WTC11 (cell line): ENCODE measurements at regions of chr10 and their contacts with region 1.

Region 1: DNA sequence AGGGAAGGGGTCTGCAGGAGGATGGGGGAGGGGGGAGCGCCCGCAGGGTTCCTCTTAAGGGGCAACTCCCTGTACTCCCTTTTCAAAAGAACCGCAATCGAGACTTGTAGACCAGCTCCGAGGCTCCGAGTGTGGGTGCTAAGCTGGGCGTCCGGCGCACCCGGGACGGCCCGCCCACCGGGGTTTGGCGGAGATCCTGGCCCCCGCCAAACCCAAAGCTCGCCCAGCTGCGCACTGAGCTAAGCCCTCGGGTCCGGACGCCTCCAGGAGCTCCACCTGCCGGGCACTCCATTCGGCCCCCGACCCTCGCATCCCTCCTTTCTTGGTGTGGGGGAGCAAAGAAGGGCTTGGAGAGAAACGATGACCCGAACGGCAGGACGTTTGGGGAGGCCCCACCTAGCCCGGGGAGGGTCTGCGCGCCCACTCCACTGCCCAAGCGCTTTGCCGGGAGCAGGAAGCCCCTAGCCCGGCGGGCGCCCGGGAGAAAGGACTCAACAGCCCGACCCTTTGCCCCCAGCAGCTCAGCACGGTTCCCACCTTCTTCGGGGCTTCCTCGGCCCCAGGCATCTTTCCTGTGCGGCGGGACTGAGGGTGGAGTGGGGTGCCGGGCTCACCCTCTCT is 651 bp downstream of the AFAP1L2 start:
- DNase-seq: peak; percentile 66
- ATAC-seq: peak; percentile 68
- H3K4me3 Mint-ChIP-seq: peak overlapping the region; percentile 88
- H3K27ac Mint-ChIP-seq: no peak overlapping the region
- H3K4me1 Mint-ChIP-seq: peaks cover 33% of the 10 kb centered on the region
- H3K27me3 Mint-ChIP-seq: peaks cover 62% of the 10 kb centered on the region
- CTCF ChIP-seq: no peak

Region 2: GRCh38 chr10:114320249-114321116 is 83.2 kb before region 1 on chr10:
- CTCF ChIA-PET with region 1: no interaction called
- POLR2A ChIA-PET with region 1: no interaction called
- DNase-seq: no peak
- ATAC-seq: peak; percentile 38
- H3K4me3 Mint-ChIP-seq: no peak overlapping the region
- H3K27ac Mint-ChIP-seq: no peak overlapping the region
- H3K4me1 Mint-ChIP-seq: peaks cover 5% of the 10 kb centered on the region
- H3K27me3 Mint-ChIP-seq: no peaks in the 10 kb centered on the region
- CTCF ChIP-seq: no peak

Region 3: GRCh38 chr10:114388275-114388674 is 15.4 kb before region 1 on chr10:
- CTCF ChIA-PET with region 1: interaction called, 40 read pairs
- POLR2A ChIA-PET with region 1: no interaction called
- DNase-seq: no peak
- ATAC-seq: no peak
- H3K4me3 Mint-ChIP-seq: no peak overlapping the region
- H3K27ac Mint-ChIP-seq: no peak overlapping the region
- H3K4me1 Mint-ChIP-seq: peaks cover 9% of the 10 kb centered on the region
- H3K27me3 Mint-ChIP-seq: no peaks in the 10 kb centered on the region
- CTCF ChIP-seq: no peak